HepG2 (cell line): ENCODE measurements at regions of chr7 and their contacts with region 1.

Region 1: GRCh38 chr7:19665399-19666008 is 43.3 kb downstream of the POLR1F start:
- DNase-seq: peak; percentile 7
- ATAC-seq: 0 out of 3 replicates have a peak, but pooled peaks have one; percentile 24
- H3K4me3 ChIP-seq: no peak overlapping the region
- H3K27ac ChIP-seq: no peak overlapping the region
- H3K4me1 ChIP-seq: no peaks in the 10 kb centered on the region
- H3K27me3 ChIP-seq: no peaks in the 10 kb centered on the region
- CTCF ChIP-seq: peak; percentile 43; the same call in 1 of the 2 replicates
- EP300 ChIP-seq: no peak
- POLR2A ChIP-seq: no peak
- RAD21 ChIP-seq: no peak

Region 2: DNA sequence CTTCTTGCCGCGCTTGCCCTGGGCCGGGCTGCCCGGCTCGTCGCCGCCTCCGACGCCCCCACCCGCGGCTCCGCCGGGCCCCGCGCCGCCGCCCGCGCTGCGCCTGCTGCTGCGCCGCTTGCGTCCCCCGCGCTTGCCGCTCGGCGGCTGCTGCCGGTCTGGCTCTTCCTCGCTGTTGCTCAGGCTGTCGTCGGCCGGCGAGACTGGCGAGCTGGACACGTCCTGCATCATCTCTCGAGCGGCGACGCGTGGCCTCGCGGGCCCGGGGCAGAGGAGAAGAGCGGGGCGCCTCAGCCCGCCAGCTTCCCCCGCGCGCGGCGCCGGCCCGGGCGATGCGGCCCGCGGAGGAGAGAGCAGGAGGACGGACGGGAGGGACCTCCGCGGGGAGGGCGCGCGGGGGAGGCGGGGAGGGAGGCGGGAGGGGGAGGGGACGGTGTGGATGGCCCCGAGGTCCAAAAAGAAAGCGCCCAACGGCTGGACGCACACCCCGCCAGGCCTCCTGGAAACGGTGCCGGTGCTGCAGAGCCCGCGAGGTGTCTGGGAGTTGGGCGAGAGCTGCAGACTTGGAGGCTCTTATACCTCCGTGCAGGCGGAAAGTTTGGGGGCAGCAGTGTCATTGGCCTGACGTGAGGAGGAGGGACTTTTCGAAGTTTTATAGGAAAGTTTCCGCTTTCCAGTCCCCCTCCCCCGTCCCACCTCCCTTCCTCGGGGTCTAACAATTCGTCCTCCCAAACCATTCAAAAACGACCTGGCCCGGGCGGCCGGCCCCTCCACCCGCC is 548.2 kb before region 1 on chr7 and contains the start of gene TWIST1:
- CTCF ChIA-PET with region 1: no interaction called
- POLR2A ChIA-PET with region 1: no interaction called
- in situ Hi-C with region 1: loop called (anchors 25 kb)
- intact Hi-C with region 1: loop called (anchors 1 kb)
- DNase-seq: no peak
- ATAC-seq: no peak
- H3K4me3 ChIP-seq: no peak within 1 kb of the TSS
- H3K27ac ChIP-seq: no peak within 1 kb of the TSS
- H3K4me1 ChIP-seq: no peaks in the 10 kb centered on the region
- H3K27me3 ChIP-seq: peaks cover 0 to 7% of the 10 kb centered on the region in 2 experiments; a peak in 3 of 5 replicates
- CTCF ChIP-seq: no peak
- EP300 ChIP-seq: no peak
- POLR2A ChIP-seq: no peak
- RAD21 ChIP-seq: no peak
- total RNA-seq, gene TWIST1: not detected in 2 replicates

Region 3: DNA sequence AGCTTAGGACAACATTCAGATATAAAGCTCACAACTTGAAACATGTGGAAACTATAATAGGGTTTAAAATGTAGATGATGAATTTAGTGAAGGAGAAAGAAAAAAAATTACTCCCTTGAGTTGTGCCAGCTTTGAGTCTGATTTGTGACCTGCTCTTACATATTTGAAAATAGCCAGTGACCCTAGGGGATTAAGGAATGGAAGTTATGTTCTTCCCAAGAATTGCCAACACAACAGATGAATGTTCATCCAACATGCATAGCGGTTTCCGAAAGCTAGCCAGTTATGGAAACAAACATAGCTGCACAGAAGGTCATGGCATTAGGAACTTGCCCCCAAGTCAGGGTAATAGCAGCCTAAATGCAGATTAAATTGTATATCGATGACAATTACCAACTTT is 97.1 kb after region 1 on chr7:
- CTCF ChIA-PET with region 1: no interaction called
- POLR2A ChIA-PET with region 1: no interaction called
- in situ Hi-C with region 1: no loop called
- intact Hi-C with region 1: no loop called
- DNase-seq: no peak
- ATAC-seq: no peak
- H3K4me3 ChIP-seq: no peak overlapping the region
- H3K27ac ChIP-seq: no peak overlapping the region
- H3K4me1 ChIP-seq: no peaks in the 10 kb centered on the region
- H3K27me3 ChIP-seq: no peaks in the 10 kb centered on the region
- CTCF ChIP-seq: no peak
- EP300 ChIP-seq: no peak
- POLR2A ChIP-seq: no peak
- RAD21 ChIP-seq: no peak